Naive thymus-derived CD4-positive, alpha-beta T cell (primary cell): ENCODE measurements at regions of chr9 and their contacts with region 1.

Region 1: DNA sequence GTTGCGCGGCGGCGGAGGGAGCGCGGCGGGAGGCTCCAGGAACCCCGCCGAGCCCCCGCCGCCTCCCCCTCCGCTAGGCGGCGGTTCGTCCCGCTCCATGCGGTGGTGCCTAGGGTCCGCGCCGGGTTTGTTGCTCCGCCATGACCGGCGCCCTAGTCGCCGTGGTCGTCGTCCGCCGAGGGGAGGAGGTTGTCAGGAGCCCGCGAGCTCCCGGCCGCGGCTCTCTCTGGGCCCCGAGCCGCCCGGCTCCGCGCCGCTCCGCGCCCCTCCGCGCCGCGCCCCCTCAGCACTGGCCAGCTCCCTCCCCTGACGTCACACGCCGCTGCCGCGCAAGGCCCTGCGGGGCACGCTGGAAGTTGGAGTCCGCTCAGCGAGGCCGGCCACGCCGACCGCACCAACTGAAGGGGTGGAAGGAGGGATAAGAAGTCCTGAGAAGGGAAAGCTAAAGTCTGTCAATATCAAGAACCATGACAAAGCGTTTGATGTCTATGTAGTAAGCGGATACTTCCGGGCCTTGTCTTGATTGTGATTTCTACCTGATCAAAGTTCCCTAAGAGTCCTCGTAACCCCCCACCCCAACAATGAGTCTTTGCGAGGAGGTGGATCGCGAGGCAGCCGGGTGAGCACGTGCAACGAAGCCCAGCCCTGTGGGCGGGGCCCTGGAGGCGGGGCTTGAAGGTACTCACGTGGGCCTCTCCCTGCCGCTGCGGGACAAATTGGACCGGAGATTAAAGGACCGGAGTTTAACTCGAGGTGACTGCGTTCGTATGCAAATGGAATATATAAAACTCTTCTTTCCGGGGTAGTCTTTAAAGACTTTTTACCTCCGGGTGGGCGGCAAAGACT is at the start of gene NR6A1:
- DNase-seq: peak; percentile 86 to 94 (median 91)
- ATAC-seq: peak; percentile 94
- H3K4me3 ChIP-seq: peak within 1 kb of the TSS; percentile 87
- H3K4me3 Mint-ChIP-seq: peak within 1 kb of the TSS; percentile 86 to 97 (median 91)
- H3K27ac ChIP-seq: no peak within 1 kb of the TSS
- H3K27ac Mint-ChIP-seq: peak within 1 kb of the TSS; percentile 39 to 93 (median 79)
- H3K4me1 ChIP-seq: peaks cover 13 to 20% of the 10 kb centered on the region in 2 donors
- H3K4me1 Mint-ChIP-seq: peaks cover 17 to 46% (median 42%) of the 10 kb centered on the region in 7 donors
- H3K27me3 ChIP-seq: peaks cover 7 to 38% of the 10 kb centered on the region in 2 donors
- H3K27me3 Mint-ChIP-seq: peaks cover 61 to 82% (median 75%) of the 10 kb centered on the region in 5 donors
- total RNA-seq, gene NR6A1: 0.21 to 0.78 (median 0.51) TPM in 3 of 5 experiments, not detected in the others

Region 2: GRCh38 chr9:124415102-124415851 is 356.0 kb before region 1 on chr9 and contains the start of gene PSMB7:
- CTCF ChIA-PET with region 1: no interaction called
- POLR2A ChIA-PET with region 1: no interaction called
- intact Hi-C with region 1: loop called in 1 of 2 experiments (anchors 5 kb)
- DNase-seq: peak; percentile 91 to 97 (median 96)
- ATAC-seq: peak; percentile 99
- H3K4me3 ChIP-seq: peak within 1 kb of the TSS; percentile 75
- H3K4me3 Mint-ChIP-seq: peak within 1 kb of the TSS; percentile 93 to 99 (median 97)
- H3K27ac ChIP-seq: peak within 1 kb of the TSS; percentile 78
- H3K27ac Mint-ChIP-seq: peak within 1 kb of the TSS; percentile 82 to 98 (median 94)
- H3K4me1 ChIP-seq: peaks cover 13 to 18% of the 10 kb centered on the region in 2 donors
- H3K4me1 Mint-ChIP-seq: peaks cover 16 to 46% (median 39%) of the 10 kb centered on the region in 7 donors
- H3K27me3 ChIP-seq: no peaks in the 10 kb centered on the region
- H3K27me3 Mint-ChIP-seq: no peaks in the 10 kb centered on the region
- total RNA-seq, gene PSMB7: 59.4 to 129 (median 63.2) TPM

Region 3: GRCh38 chr9:124852829-124853531 is 81.7 kb after region 1 on chr9 and contains the start of gene WDR38:
- CTCF ChIA-PET with region 1: interaction called, 66 read pairs
- POLR2A ChIA-PET with region 1: interaction called, 7 read pairs
- intact Hi-C with region 1: loop called (anchors 1 kb)
- DNase-seq: peak; percentile 55 to 86 (median 76)
- ATAC-seq: peak; percentile 95
- H3K4me3 ChIP-seq: peak within 1 kb of the TSS; percentile 50
- H3K4me3 Mint-ChIP-seq: peak within 1 kb of the TSS in 9 of 10 donors; percentile 64 to 79 (median 68)
- H3K27ac ChIP-seq: peak within 1 kb of the TSS; percentile 46
- H3K27ac Mint-ChIP-seq: peak within 1 kb of the TSS in 3 of 9 donors; percentile 9 to 23 (median 19)
- H3K4me1 ChIP-seq: peaks cover 8% of the 10 kb centered on the region in 2 donors
- H3K4me1 Mint-ChIP-seq: peaks cover 4 to 14% (median 6%) of the 10 kb centered on the region in 7 donors
- H3K27me3 ChIP-seq: no peaks in the 10 kb centered on the region
- H3K27me3 Mint-ChIP-seq: peaks cover 5 to 16% (median 9%) of the 10 kb centered on the region in 5 donors
- total RNA-seq, gene WDR38: not detected

Region 4: DNA sequence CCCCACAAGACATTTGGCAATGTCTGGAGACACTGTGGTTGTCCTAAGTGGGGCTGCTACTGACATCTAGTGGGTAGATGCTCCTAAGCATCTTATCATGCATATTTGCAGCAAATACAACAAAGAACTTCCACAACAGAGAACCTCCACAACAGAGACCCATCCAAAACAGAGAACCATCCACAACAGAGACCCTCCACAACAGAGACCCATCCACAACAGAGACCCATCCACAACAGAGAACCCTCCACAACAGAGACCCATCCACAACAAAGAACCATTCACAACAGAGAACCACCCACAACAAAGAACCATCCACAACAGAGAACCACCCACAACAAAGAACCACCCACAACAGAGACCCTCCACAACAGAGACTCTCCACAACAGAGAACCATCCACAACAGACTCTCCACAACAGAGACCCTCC is 123.5 kb after region 1 on chr9:
- CTCF ChIA-PET with region 1: interaction called, 16 read pairs
- POLR2A ChIA-PET with region 1: no interaction called
- intact Hi-C with region 1: loop called (anchors 1 kb)
- DNase-seq: peak in 7 of 9 donors; percentile 68 to 80 (median 75)
- ATAC-seq: peak; percentile 87
- H3K4me3 ChIP-seq: no peak overlapping the region
- H3K4me3 Mint-ChIP-seq: peak overlapping the region in 6 of 10 donors; percentile 1 to 88 (median 66)
- H3K27ac ChIP-seq: peak overlapping the region; percentile 30
- H3K27ac Mint-ChIP-seq: peak overlapping the region; percentile 5 to 98 (median 89)
- H3K4me1 ChIP-seq: peaks cover 0 to 4% of the 10 kb centered on the region in 2 donors
- H3K4me1 Mint-ChIP-seq: peaks cover 7 to 23% (median 18%) of the 10 kb centered on the region in 7 donors
- H3K27me3 ChIP-seq: no peaks in the 10 kb centered on the region
- H3K27me3 Mint-ChIP-seq: peaks cover 0 to 9% (median 0%) of the 10 kb centered on the region in 5 donors

Region 5: DNA sequence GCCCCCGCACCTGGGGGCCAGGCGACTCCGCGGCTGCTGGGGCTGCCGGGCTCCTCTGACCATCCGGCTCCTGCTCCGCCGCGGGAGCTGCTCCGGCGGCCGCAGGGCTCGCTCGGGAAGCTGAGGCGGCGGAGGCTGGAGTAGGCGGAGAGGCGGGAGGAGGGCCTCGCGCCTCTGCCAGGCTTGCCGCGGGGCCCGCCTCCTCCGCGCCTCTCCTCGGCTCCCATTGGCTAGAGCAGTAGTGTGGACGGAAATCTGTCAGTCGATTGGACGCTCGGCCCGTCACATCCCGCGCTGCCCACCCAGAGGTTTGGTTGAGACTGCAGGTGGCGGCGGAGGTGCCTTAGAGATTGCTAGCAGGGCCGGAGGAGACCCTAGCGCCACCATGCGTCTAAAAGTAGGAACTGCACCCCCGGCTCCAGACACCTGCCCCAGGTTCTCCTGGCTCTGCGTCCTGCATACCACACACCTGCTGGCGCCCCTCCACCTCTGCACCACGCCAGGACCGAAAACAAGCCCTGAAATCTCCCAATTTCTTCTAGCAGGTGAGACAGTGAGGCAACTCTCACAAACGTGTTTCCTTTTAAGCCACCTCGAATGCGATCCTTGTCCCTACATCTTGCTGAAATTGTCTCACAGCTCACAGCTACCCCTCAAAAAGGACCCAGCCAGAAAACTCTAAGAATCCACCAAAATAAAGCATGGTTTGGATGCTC is 372.3 kb after region 1 on chr9 and contains the start of gene SCAI:
- CTCF ChIA-PET with region 1: interaction called, 3 read pairs
- POLR2A ChIA-PET with region 1: no interaction called
- intact Hi-C with region 1: loop called (anchors 1 kb)
- DNase-seq: peak; percentile 85 to 99 (median 98)
- ATAC-seq: peak; percentile 99
- H3K4me3 ChIP-seq: peak within 1 kb of the TSS; percentile 73
- H3K4me3 Mint-ChIP-seq: peak within 1 kb of the TSS; percentile 90 to 99 (median 97)
- H3K27ac ChIP-seq: peak within 1 kb of the TSS; percentile 70
- H3K27ac Mint-ChIP-seq: peak within 1 kb of the TSS; percentile 82 to 94 (median 89)
- H3K4me1 ChIP-seq: peaks cover 0 to 17% of the 10 kb centered on the region in 2 donors
- H3K4me1 Mint-ChIP-seq: peaks cover 21 to 52% (median 44%) of the 10 kb centered on the region in 7 donors
- H3K27me3 ChIP-seq: no peaks in the 10 kb centered on the region
- H3K27me3 Mint-ChIP-seq: no peaks in the 10 kb centered on the region
- total RNA-seq, gene SCAI: 12.8 to 23.9 (median 16.6) TPM

Region 6: GRCh38 chr9:125241000-125241862 is 470.0 kb after region 1 on chr9 and contains the start of gene HSPA5:
- CTCF ChIA-PET with region 1: no interaction called
- POLR2A ChIA-PET with region 1: no interaction called
- intact Hi-C with region 1: loop called (anchors 1 to 5 kb)
- DNase-seq: peak; percentile 94 to 100 (median 99)
- ATAC-seq: peak; percentile 94
- H3K4me3 ChIP-seq: peak within 1 kb of the TSS; percentile 85
- H3K4me3 Mint-ChIP-seq: peak within 1 kb of the TSS; percentile 94 to 99 (median 98)
- H3K27ac ChIP-seq: peak within 1 kb of the TSS; percentile 97
- H3K27ac Mint-ChIP-seq: peak within 1 kb of the TSS; percentile 96 to 100 (median 99)
- H3K4me1 ChIP-seq: peaks cover 39 to 48% of the 10 kb centered on the region in 2 donors
- H3K4me1 Mint-ChIP-seq: peaks cover 27 to 49% (median 45%) of the 10 kb centered on the region in 7 donors
- H3K27me3 ChIP-seq: no peaks in the 10 kb centered on the region
- H3K27me3 Mint-ChIP-seq: peaks cover 0 to 5% (median 0%) of the 10 kb centered on the region in 5 donors
- total RNA-seq, gene HSPA5: 127 to 248 (median 155) TPM